ENCODE measurements at regions of chr3 and their contacts with region 1.

Region 1: GRCh38 chr3:50971487-50971924 is 296.8 kb downstream of the DOCK3 start:
- DNase-seq: peak; percentile 6 to 85 (median 55)
- ATAC-seq: peak; percentile 98
- H3K4me3 ChIP-seq: no peak overlapping the region
- H3K4me3 Mint-ChIP-seq: no peak overlapping the region
- H3K27ac ChIP-seq: peak overlapping the region in 1 of 2 experiments; percentile 49
- H3K27ac Mint-ChIP-seq: peak overlapping the region; percentile 41
- H3K4me1 ChIP-seq: peaks cover 10% of the 10 kb centered on the region
- H3K4me1 Mint-ChIP-seq: peaks cover 15% of the 10 kb centered on the region
- H3K27me3 ChIP-seq: no peaks in the 10 kb centered on the region
- H3K27me3 Mint-ChIP-seq: no peaks in the 10 kb centered on the region
- CTCF ChIP-seq: peak; percentile 84

Region 2: DNA sequence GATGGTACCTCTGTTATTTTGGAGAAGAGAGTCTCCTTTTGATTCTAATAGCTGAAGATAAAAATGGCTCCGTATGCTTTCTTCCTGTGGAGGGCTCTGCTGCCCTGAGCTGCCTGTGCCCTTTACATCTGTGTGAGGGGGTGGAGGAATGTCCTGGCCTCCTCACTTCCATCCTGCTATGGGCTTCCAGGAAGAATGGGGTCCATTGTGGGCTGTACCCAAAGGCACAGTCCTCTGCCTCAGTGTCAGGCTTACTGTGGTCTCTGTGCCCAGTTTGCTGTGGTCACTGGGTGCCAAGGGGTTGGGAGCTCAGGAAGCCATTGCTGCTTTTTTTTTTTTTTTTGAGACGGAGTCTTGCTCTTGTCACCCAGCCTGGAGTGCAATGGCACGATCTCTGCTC is 1487.0 kb before region 1 on chr3:
- CTCF ChIA-PET with region 1: no interaction called
- POLR2A ChIA-PET with region 1: no interaction called
- intact Hi-C with region 1: no loop called
- DNase-seq: no peak
- ATAC-seq: no peak
- H3K4me3 ChIP-seq: no peak overlapping the region
- H3K4me3 Mint-ChIP-seq: no peak overlapping the region
- H3K27ac ChIP-seq: no peak overlapping the region
- H3K27ac Mint-ChIP-seq: no peak overlapping the region
- H3K4me1 ChIP-seq: no peaks in the 10 kb centered on the region
- H3K4me1 Mint-ChIP-seq: peaks cover 9% of the 10 kb centered on the region
- H3K27me3 ChIP-seq: no peaks in the 10 kb centered on the region
- H3K27me3 Mint-ChIP-seq: no peaks in the 10 kb centered on the region
- CTCF ChIP-seq: no peak

Region 3: DNA sequence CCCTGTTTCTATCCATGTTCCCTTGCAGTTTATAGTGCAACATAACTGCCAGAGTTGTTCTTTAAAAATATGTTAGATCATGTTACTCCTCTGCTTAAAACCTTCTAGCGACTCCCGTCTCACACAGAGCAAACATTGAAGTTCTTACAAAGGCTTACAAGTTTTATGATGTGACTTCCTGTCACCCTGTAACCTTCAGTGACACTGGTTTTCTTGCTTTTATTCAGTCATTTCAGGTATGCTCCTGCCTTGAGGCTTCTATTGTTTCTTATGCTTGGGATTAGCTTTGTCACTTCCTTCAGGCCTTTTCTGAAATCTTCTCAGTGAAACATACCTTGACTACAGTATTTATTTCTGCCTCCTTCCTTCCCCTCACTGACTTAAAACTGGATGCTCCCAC is 44.6 kb before region 1 on chr3:
- CTCF ChIA-PET with region 1: no interaction called
- POLR2A ChIA-PET with region 1: no interaction called
- intact Hi-C with region 1: no loop called
- DNase-seq: peak in 1 of 9 experiments; percentile 3
- ATAC-seq: no peak
- H3K4me3 ChIP-seq: no peak overlapping the region
- H3K4me3 Mint-ChIP-seq: no peak overlapping the region
- H3K27ac ChIP-seq: no peak overlapping the region
- H3K27ac Mint-ChIP-seq: peak overlapping the region; percentile 52
- H3K4me1 ChIP-seq: peaks cover 6% of the 10 kb centered on the region
- H3K4me1 Mint-ChIP-seq: peaks cover 9% of the 10 kb centered on the region
- H3K27me3 ChIP-seq: no peaks in the 10 kb centered on the region
- H3K27me3 Mint-ChIP-seq: peaks cover 15% of the 10 kb centered on the region
- CTCF ChIP-seq: no peak

Region 4: DNA sequence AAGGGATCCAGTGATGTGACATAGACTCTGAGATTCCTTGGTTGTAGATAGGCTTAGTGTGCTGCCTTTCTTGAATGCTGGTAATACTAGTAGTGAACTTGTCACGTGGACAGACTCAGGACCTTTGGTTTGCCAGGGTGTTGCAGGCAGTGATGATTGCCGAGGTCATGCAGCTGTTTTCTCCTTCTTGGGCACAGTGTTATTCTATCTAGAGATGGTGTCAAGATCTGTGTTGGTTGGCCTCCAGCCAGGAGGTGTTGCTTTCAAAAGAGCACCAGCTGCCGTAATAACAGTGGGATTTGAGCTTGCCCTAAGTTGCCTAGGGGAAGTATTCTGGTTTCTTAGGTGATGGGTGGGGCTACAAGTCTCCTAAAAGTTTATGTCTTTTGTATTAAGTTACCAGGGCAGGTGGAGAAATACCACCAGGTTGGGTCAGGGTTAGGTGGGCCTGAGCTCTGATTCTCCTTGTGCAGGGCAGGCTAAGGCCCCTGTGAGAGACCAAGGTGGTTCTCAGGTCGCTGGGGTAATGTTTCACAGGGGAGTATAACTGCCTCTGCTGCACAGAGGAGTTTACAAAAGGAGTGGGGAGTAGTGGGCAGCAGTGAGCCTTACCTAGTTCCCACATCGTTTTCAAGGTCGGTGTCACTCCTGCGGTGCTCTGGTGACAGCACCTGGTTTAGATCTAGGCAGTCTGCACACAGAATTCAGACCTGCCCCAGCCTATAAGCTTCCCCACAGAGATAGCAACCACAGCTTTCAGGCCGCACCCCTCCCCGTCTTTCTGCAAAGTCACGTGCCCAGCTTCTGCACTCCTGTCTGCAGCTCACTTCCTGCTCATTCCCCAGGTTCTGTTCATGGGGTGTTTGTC is 53.5 kb after region 1 on chr3:
- CTCF ChIA-PET with region 1: interaction called, 11 read pairs
- POLR2A ChIA-PET with region 1: interaction called, 9 read pairs
- intact Hi-C with region 1: loop called (anchors 2 kb)
- DNase-seq: peak; percentile 59 to 94 (median 78)
- ATAC-seq: peak; percentile 92
- H3K4me3 ChIP-seq: peak overlapping the region; percentile 36 to 38
- H3K4me3 Mint-ChIP-seq: peak overlapping the region; percentile 72
- H3K27ac ChIP-seq: peak overlapping the region; percentile 69 to 83
- H3K27ac Mint-ChIP-seq: peak overlapping the region; percentile 93
- H3K4me1 ChIP-seq: peaks cover 44% of the 10 kb centered on the region
- H3K4me1 Mint-ChIP-seq: peaks cover 61% of the 10 kb centered on the region
- H3K27me3 ChIP-seq: no peaks in the 10 kb centered on the region
- H3K27me3 Mint-ChIP-seq: no peaks in the 10 kb centered on the region
- CTCF ChIP-seq: no peak

Region 5: DNA sequence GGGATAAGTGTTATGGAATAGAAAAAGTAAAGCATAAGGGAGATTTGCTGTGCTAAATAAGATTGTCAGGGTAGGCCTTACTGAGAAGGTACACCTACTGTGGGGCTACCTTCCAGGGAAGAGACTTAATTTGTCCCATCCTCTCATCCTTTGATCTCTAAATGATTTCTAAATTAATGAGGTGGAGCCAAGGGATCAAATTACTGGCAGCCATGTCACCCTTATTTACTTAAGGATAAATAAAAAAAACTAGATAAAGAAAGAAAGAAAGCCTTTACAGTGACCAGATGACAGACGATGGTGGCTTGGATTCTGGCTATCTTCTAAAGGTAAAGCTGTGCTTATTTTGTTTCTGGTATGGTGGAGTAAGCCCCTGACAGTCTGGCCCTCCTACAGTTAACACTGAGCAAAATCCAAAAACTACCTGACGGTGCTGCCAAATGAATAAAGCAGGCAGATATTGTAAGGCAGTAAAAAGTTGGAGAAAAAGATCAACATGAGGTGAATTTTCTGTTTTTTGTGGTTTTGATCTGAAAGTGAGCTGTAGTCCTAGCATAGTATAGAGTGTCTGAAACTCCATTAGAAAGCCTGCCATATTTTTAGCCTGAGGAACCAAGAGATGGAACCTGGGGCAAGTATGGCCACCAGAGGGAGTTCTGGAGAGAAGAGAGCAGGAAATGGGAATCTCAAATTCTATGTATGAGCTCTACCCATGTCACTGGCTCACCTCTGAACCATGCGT is 128.5 kb after region 1 on chr3:
- CTCF ChIA-PET with region 1: interaction called, 16 read pairs
- POLR2A ChIA-PET with region 1: interaction called, 3 read pairs
- intact Hi-C with region 1: loop called in 1 of 2 experiments (anchors 5 kb)
- DNase-seq: peak in 2 of 9 experiments; percentile 15 to 29
- ATAC-seq: no peak
- H3K4me3 ChIP-seq: no peak overlapping the region
- H3K4me3 Mint-ChIP-seq: no peak overlapping the region
- H3K27ac ChIP-seq: no peak overlapping the region
- H3K27ac Mint-ChIP-seq: no peak overlapping the region
- H3K4me1 ChIP-seq: no peaks in the 10 kb centered on the region
- H3K4me1 Mint-ChIP-seq: peaks cover 18% of the 10 kb centered on the region
- H3K27me3 ChIP-seq: no peaks in the 10 kb centered on the region
- H3K27me3 Mint-ChIP-seq: no peaks in the 10 kb centered on the region
- CTCF ChIP-seq: no peak

Region 6: GRCh38 chr3:51190199-51190839 is 218.8 kb after region 1 on chr3:
- CTCF ChIA-PET with region 1: interaction called, 18 read pairs
- POLR2A ChIA-PET with region 1: no interaction called
- intact Hi-C with region 1: loop called (anchors 2 kb)
- DNase-seq: peak in 2 of 9 experiments; percentile 15 to 29
- ATAC-seq: no peak
- H3K4me3 ChIP-seq: no peak overlapping the region
- H3K4me3 Mint-ChIP-seq: no peak overlapping the region
- H3K27ac ChIP-seq: no peak overlapping the region
- H3K27ac Mint-ChIP-seq: no peak overlapping the region
- H3K4me1 ChIP-seq: peaks cover 8% of the 10 kb centered on the region
- H3K4me1 Mint-ChIP-seq: peaks cover 30% of the 10 kb centered on the region
- H3K27me3 ChIP-seq: no peaks in the 10 kb centered on the region
- H3K27me3 Mint-ChIP-seq: no peaks in the 10 kb centered on the region
- CTCF ChIP-seq: no peak

Region 7: DNA sequence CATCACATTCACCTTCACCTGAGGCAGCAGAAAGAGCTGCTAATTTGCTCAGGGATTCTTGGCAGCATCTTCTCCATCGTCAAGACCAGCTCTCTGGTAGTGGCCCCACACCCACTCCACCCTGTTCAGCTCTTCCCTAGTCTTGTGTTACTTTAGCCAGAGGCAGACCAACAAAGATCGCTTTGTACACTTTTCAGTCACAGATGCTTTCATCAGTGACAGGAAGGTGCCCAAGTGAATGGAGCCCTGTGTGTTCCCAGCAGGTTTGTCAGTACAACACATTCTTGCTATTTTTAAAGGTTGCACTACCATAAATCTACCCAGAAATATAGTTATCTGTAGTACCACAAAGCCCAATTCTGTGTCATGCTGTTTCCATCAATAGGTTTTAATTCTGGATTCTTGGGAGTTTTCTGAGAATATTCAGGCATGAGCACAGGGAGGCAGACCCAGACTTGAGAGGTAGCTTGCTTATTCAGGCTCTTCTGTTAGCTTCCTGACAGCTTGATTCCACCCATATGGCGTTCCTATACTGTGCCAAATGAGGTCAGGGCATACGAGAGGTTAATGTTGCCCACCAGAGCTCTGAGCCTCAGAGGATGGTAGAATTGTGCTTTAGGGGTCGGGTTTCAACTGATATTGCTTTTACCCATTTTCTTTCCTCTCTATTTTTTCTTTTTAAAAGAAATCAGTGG is 303.8 kb after region 1 on chr3:
- CTCF ChIA-PET with region 1: interaction called, 36 read pairs
- POLR2A ChIA-PET with region 1: no interaction called
- intact Hi-C with region 1: loop called (anchors 2 to 5 kb)
- DNase-seq: no peak
- ATAC-seq: no peak
- H3K4me3 ChIP-seq: no peak overlapping the region
- H3K4me3 Mint-ChIP-seq: no peak overlapping the region
- H3K27ac ChIP-seq: no peak overlapping the region
- H3K27ac Mint-ChIP-seq: peak overlapping the region; percentile 83
- H3K4me1 ChIP-seq: peaks cover 29% of the 10 kb centered on the region
- H3K4me1 Mint-ChIP-seq: peaks cover 49% of the 10 kb centered on the region
- H3K27me3 ChIP-seq: no peaks in the 10 kb centered on the region
- H3K27me3 Mint-ChIP-seq: no peaks in the 10 kb centered on the region
- CTCF ChIP-seq: no peak

Region 8: GRCh38 chr3:51371943-51372557 is 400.5 kb after region 1 on chr3:
- CTCF ChIA-PET with region 1: interaction called, 13 read pairs
- POLR2A ChIA-PET with region 1: no interaction called
- intact Hi-C with region 1: loop called (anchors 1 to 2 kb)
- DNase-seq: peak; percentile 23 to 74 (median 51)
- ATAC-seq: peak; percentile 36
- H3K4me3 ChIP-seq: no peak overlapping the region
- H3K4me3 Mint-ChIP-seq: no peak overlapping the region
- H3K27ac ChIP-seq: no peak overlapping the region
- H3K27ac Mint-ChIP-seq: no peak overlapping the region
- H3K4me1 ChIP-seq: no peaks in the 10 kb centered on the region
- H3K4me1 Mint-ChIP-seq: peaks cover 2% of the 10 kb centered on the region
- H3K27me3 ChIP-seq: no peaks in the 10 kb centered on the region
- H3K27me3 Mint-ChIP-seq: peaks cover 2% of the 10 kb centered on the region
- CTCF ChIP-seq: peak; percentile 46

Region 9: GRCh38 chr3:51384726-51385473 is 413.4 kb after region 1 on chr3 and contains the start of gene MANF:
- CTCF ChIA-PET with region 1: interaction called, 3 read pairs
- POLR2A ChIA-PET with region 1: no interaction called
- intact Hi-C with region 1: loop called in 1 of 2 experiments (anchors 5 kb)
- DNase-seq: peak; percentile 94 to 99 (median 97)
- ATAC-seq: peak; percentile 93
- H3K4me3 ChIP-seq: peak within 1 kb of the TSS; percentile 86 to 94
- H3K4me3 Mint-ChIP-seq: peak within 1 kb of the TSS; percentile 99
- H3K27ac ChIP-seq: peak within 1 kb of the TSS; percentile 90 to 93
- H3K27ac Mint-ChIP-seq: peak within 1 kb of the TSS; percentile 100
- H3K4me1 ChIP-seq: peaks cover 35% of the 10 kb centered on the region
- H3K4me1 Mint-ChIP-seq: peaks cover 44% of the 10 kb centered on the region
- H3K27me3 ChIP-seq: no peaks in the 10 kb centered on the region
- H3K27me3 Mint-ChIP-seq: no peaks in the 10 kb centered on the region
- CTCF ChIP-seq: no peak
- total RNA-seq, gene MANF: 32.2 to 35.0 TPM

Measured in CD8-positive, alpha-beta T cell (primary cell).